ENCODE measurements at regions of chr12 and their contacts with region 1.

Region 1: DNA sequence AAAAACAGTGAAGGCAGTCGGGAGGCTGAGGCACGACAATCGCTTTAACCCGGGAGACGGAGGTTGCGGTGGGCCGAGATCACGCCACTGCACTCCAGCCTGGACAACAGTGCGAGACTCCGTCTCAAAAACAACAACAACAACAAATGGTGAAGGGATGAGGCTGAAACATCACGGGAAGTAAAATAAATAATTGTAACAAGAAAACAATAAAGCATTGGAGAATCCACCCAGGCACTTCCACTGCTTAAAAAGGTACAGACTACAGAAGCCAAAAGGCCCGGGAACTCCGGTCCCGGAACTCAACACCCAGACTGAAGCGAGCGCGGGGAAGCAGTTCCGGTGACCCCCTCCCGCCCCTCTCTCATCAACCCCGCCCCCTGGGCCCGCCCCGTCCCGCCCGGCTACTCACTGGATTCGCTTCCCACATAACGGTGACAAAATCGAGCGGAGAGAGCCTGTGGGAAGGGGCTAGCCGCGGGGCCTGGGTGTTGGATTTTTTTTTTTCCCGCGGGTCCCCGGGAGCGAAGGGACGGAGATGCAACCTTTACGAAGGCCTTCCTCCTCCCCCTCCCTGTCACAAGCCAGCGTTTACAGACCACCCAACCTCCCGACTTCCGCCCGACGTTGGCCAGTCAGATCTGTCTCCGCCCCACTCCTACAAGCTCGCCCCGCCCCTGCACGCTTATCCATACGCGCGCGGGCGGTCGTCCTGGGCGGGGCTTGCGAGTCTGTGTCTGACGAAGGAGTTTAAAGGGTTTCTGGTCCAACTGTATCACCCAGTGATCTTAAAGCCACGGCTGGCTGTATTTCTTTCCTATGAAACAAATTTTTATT is at the start of gene PARP11:
- DNase-seq: peak; percentile 98
- H3K4me3 ChIP-seq: peak within 1 kb of the TSS; percentile 73
- H3K4me3 Mint-ChIP-seq: peak within 1 kb of the TSS; percentile 95
- H3K27ac Mint-ChIP-seq: peak within 1 kb of the TSS; percentile 87
- H3K4me1 ChIP-seq: peaks cover 4% of the 10 kb centered on the region
- H3K4me1 Mint-ChIP-seq: peaks cover 9% of the 10 kb centered on the region
- H3K27me3 ChIP-seq: no peaks in the 10 kb centered on the region
- H3K27me3 Mint-ChIP-seq: peaks cover 2% of the 10 kb centered on the region
- CTCF ChIP-seq: no peak
- total RNA-seq, gene PARP11: 18.1 and 19.0 TPM in 2 replicates

Region 2: GRCh38 chr12:3604748-3605586 is 268.1 kb before region 1 on chr12:
- CTCF ChIA-PET with region 1: no interaction called
- POLR2A ChIA-PET with region 1: no interaction called
- intact Hi-C with region 1: no loop called
- DNase-seq: no peak
- H3K4me3 ChIP-seq: no peak overlapping the region
- H3K4me3 Mint-ChIP-seq: no peak overlapping the region
- H3K27ac Mint-ChIP-seq: no peak overlapping the region
- H3K4me1 ChIP-seq: no peaks in the 10 kb centered on the region
- H3K4me1 Mint-ChIP-seq: peaks cover 5% of the 10 kb centered on the region
- H3K27me3 ChIP-seq: no peaks in the 10 kb centered on the region; the same call in 1 of the 2 replicates
- H3K27me3 Mint-ChIP-seq: peaks cover 35% of the 10 kb centered on the region
- CTCF ChIP-seq: no peak

Region 3: GRCh38 chr12:4030929-4031702 is 158.1 kb after region 1 on chr12:
- CTCF ChIA-PET with region 1: no interaction called
- POLR2A ChIA-PET with region 1: interaction called, 14 read pairs
- intact Hi-C with region 1: no loop called
- DNase-seq: peak; percentile 99
- H3K4me3 ChIP-seq: peak overlapping the region; percentile 44
- H3K4me3 Mint-ChIP-seq: peak overlapping the region; percentile 67
- H3K27ac Mint-ChIP-seq: peak overlapping the region; percentile 96
- H3K4me1 ChIP-seq: peaks cover 49% of the 10 kb centered on the region
- H3K4me1 Mint-ChIP-seq: peaks cover 57% of the 10 kb centered on the region
- H3K27me3 ChIP-seq: no peaks in the 10 kb centered on the region
- H3K27me3 Mint-ChIP-seq: no peaks in the 10 kb centered on the region
- CTCF ChIP-seq: no peak